MCF 10A (cell line): ENCODE measurements at regions of chr4 and their contacts with region 1.

Region 1: GRCh38 chr4:169810325-169811323 is 52.9 kb upstream of the HPF1 start:
- DNase-seq: peak; percentile 86
- H3K4me3 Mint-ChIP-seq: no peak overlapping the region
- H3K27ac Mint-ChIP-seq: no peak overlapping the region
- H3K4me1 Mint-ChIP-seq: no peaks in the 10 kb centered on the region
- H3K27me3 Mint-ChIP-seq: no peaks in the 10 kb centered on the region
- CTCF ChIP-seq: peak; percentile 64

Region 2: GRCh38 chr4:169791527-169792156 is 19.0 kb before region 1 on chr4:
- CTCF ChIA-PET with region 1: interaction called, 13 read pairs
- POLR2A ChIA-PET with region 1: no interaction called
- intact Hi-C with region 1: no loop called
- DNase-seq: peak; percentile 65
- H3K4me3 Mint-ChIP-seq: peak overlapping the region; percentile 1
- H3K27ac Mint-ChIP-seq: peak overlapping the region; percentile 10
- H3K4me1 Mint-ChIP-seq: peaks cover 27% of the 10 kb centered on the region
- H3K27me3 Mint-ChIP-seq: peaks cover 31% of the 10 kb centered on the region
- CTCF ChIP-seq: peak; percentile 41

Region 3: DNA sequence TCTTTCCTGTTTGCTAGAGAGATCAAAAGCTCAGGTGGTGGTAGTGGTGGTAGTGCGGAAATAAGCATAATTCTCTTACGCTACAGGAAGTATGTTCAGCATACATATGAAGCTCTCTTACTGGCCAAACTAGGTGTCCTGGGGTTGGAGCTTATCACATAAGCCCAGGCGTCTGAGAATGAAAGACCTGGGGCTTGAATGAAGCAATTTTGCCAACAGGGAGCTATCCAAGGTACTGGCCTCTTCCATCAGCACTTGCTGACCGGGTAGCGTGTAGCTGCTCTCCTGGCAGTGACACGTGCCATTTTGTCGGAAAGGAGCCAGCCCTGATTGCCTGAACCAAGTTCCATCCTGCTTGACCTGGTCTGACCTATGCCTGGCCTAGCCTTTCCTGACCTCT is 13.1 kb after region 1 on chr4:
- CTCF ChIA-PET with region 1: interaction called, 20 read pairs
- POLR2A ChIA-PET with region 1: no interaction called
- intact Hi-C with region 1: no loop called
- DNase-seq: peak; percentile 70
- H3K4me3 Mint-ChIP-seq: no peak overlapping the region
- H3K27ac Mint-ChIP-seq: no peak overlapping the region
- H3K4me1 Mint-ChIP-seq: no peaks in the 10 kb centered on the region
- H3K27me3 Mint-ChIP-seq: no peaks in the 10 kb centered on the region
- CTCF ChIP-seq: no peak

Region 4: GRCh38 chr4:170027181-170027829 is 216.7 kb after region 1 on chr4:
- CTCF ChIA-PET with region 1: interaction called, 17 read pairs
- POLR2A ChIA-PET with region 1: interaction called, 14 read pairs
- intact Hi-C with region 1: loop called (anchors 5 kb)
- DNase-seq: peak; percentile 96
- H3K4me3 Mint-ChIP-seq: peak overlapping the region; percentile 93
- H3K27ac Mint-ChIP-seq: peak overlapping the region; percentile 96
- H3K4me1 Mint-ChIP-seq: peaks cover 12% of the 10 kb centered on the region
- H3K27me3 Mint-ChIP-seq: no peaks in the 10 kb centered on the region
- CTCF ChIP-seq: no peak

Region 5: GRCh38 chr4:170040031-170040680 is 229.5 kb after region 1 on chr4:
- CTCF ChIA-PET with region 1: interaction called, 36 read pairs
- POLR2A ChIA-PET with region 1: no interaction called
- intact Hi-C with region 1: no loop called
- DNase-seq: no peak
- H3K4me3 Mint-ChIP-seq: no peak overlapping the region
- H3K27ac Mint-ChIP-seq: no peak overlapping the region
- H3K4me1 Mint-ChIP-seq: no peaks in the 10 kb centered on the region
- H3K27me3 Mint-ChIP-seq: no peaks in the 10 kb centered on the region
- CTCF ChIP-seq: no peak

Region 6: DNA sequence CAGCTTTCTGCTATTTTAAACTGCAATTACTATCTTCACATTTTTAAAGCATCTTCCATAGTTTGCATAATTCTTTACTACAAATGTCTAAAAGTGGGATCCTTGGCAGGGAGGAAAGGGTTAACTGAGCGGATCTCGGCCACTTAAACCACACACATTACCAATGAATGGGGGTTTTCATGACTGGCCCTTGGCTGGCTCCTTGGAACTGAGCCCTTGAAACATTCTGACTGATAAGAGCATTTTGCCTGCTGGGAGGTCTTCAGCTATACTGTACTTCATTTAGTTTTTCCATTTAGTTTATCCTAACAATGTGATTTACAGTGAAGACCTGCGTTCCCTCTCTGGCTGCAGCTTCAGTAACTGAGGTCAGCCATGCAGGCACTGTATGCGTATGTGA is 247.2 kb after region 1 on chr4:
- CTCF ChIA-PET with region 1: interaction called, 11 read pairs
- POLR2A ChIA-PET with region 1: no interaction called
- intact Hi-C with region 1: no loop called
- DNase-seq: no peak
- H3K4me3 Mint-ChIP-seq: no peak overlapping the region
- H3K27ac Mint-ChIP-seq: no peak overlapping the region
- H3K4me1 Mint-ChIP-seq: no peaks in the 10 kb centered on the region
- H3K27me3 Mint-ChIP-seq: no peaks in the 10 kb centered on the region
- CTCF ChIP-seq: no peak